ENCODE measurements at regions of chr4 and their contacts with region 1.

Region 1: GRCh38 chr4:94390804-94391410 is 48.3 kb upstream of the HPGDS start:
- DNase-seq: no peak
- H3K4me3 ChIP-seq: no peak overlapping the region
- CTCF ChIP-seq: peak; percentile 35

Region 2: DNA sequence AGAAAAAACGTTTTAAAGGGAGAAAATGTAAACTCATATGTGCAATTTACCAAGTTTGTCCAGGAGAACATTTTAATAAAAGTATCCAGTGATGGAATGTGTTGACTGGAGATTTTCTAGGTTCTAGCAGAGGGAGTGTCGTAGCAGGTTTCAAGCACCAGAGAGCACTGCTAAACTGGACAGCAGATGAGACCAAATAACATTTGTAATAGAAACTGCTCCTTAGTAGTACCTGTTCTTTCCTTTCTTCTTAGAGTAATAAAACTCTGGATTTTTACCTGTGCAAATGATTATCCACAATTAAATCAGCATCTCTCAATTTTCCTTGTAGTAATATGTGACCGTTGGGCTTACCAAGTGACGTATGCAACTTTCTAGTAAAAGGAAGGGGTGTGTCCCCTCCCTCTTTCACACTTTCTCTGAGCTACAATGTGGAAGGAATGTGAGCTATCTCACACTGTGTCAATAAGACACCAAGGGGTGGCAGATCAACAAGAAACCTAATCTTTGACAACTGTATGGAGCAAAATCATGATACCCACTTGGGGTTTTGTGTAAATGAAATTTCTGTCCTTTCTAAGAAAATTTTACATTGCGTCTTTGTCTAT is 57.8 kb before region 1 on chr4:
- CTCF ChIA-PET with region 1: interaction called, 21 read pairs
- POLR2A ChIA-PET with region 1: no interaction called
- DNase-seq: no peak
- H3K4me3 ChIP-seq: no peak overlapping the region
- CTCF ChIP-seq: peak; percentile 19

Measured in AG04449 (cell line).